ENCODE measurements at regions of chr4 and their contacts with region 1.

Region 1: DNA sequence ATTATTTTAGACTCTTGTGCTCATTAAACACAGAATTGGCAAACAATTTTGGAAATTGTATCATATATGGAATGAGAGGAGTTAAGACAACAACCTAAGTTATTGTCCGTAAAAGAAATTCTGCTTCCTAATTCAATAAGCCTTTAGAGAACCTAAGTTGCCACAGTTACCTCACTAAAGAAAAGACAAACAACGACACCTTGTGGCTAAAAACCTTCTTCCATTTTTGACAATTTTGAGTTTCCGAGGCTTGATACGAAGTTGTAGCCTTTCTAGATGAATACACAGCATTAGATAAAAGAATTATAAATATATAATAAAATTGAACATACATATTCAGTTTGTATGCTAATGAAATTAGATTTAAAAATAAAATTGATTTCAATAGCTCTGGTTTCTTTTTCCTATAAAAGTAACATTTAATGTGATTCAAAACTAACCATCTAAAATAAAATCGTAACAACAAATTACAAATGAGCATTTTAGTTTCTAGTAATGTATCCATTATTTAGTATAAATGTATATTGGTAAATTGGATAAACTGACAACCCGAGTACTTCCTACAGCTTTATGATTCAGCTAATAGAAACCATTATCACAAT is 275.1 kb downstream of the GPM6A start:
- DNase-seq: peak in 1 of 2 donors; percentile 66
- H3K4me3 ChIP-seq: no peak overlapping the region
- H3K27ac ChIP-seq: no peak overlapping the region
- H3K4me1 ChIP-seq: peaks cover 0 to 4% (median 0%) of the 10 kb centered on the region in 4 donors
- H3K27me3 ChIP-seq: no peaks in the 10 kb centered on the region
- CTCF ChIP-seq: peak in 2 of 7 experiments; percentile 16 to 34
- EP300 ChIP-seq: no peak
- POLR2A ChIP-seq: no peak

Region 2: GRCh38 chr4:174764105-174764729 is 772.7 kb before region 1 on chr4:
- intact Hi-C with region 1: loop called (anchors 10 kb)
- DNase-seq: peak in 1 of 2 donors; percentile 62
- H3K4me3 ChIP-seq: no peak overlapping the region
- H3K27ac ChIP-seq: no peak overlapping the region
- H3K4me1 ChIP-seq: no peaks in the 10 kb centered on the region
- H3K27me3 ChIP-seq: no peaks in the 10 kb centered on the region
- CTCF ChIP-seq: peak in 4 of 7 experiments; percentile 15 to 46 (median 33)
- EP300 ChIP-seq: no peak
- POLR2A ChIP-seq: no peak

Region 3: GRCh38 chr4:174983128-174983750 is 553.7 kb before region 1 on chr4:
- intact Hi-C with region 1: no loop called
- DNase-seq: no peak
- H3K4me3 ChIP-seq: no peak overlapping the region
- H3K27ac ChIP-seq: no peak overlapping the region
- H3K4me1 ChIP-seq: no peaks in the 10 kb centered on the region
- H3K27me3 ChIP-seq: no peaks in the 10 kb centered on the region
- CTCF ChIP-seq: no peak
- EP300 ChIP-seq: no peak
- POLR2A ChIP-seq: no peak

Region 4: GRCh38 chr4:175351473-175351872 is 185.5 kb before region 1 on chr4:
- intact Hi-C with region 1: no loop called
- DNase-seq: no peak
- H3K4me3 ChIP-seq: no peak overlapping the region
- H3K27ac ChIP-seq: no peak overlapping the region
- H3K4me1 ChIP-seq: no peaks in the 10 kb centered on the region
- H3K27me3 ChIP-seq: no peaks in the 10 kb centered on the region
- CTCF ChIP-seq: no peak
- EP300 ChIP-seq: no peak
- POLR2A ChIP-seq: no peak

Measured in stomach (tissue), 19 donors.